Activated CD4-positive, alpha-beta T cell treated with anti-CD3 and anti-CD28 coated beads, Interleukin-2, amount 10 ng/mL, durations not matched to agents 7 days and 5 days (primary cell): ENCODE measurements at regions of chr9 and their contacts with region 1.

Region 1: GRCh38 chr9:131277910-131278701 is 1.8 kb upstream of the FAM78A start:
- DNase-seq: peak; percentile 84
- H3K4me3 Mint-ChIP-seq: peak overlapping the region; percentile 85
- H3K27ac Mint-ChIP-seq: peak overlapping the region; percentile 97
- H3K4me1 Mint-ChIP-seq: peaks cover 25% of the 10 kb centered on the region
- H3K27me3 Mint-ChIP-seq: peaks cover 14% of the 10 kb centered on the region

Region 2: DNA sequence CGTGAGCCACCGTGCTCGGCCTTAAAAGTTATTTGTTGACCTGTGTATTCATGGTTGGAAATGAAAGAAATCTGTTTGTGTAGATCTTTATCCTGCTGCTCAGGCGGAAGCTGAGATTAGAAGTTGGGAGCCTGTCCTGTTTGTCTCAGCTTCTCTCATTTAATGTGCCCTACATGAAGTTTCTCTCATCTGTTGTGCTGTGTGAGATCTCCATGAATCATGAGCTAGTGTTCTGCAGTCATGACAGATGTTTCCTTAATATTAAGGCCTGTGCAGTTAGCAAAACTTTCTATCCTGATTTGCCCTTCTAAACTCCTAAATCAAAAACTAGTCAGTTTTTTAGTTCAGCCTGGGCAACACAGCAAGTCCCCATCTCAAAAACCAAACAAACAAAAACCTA is 61.3 kb before region 1 on chr9:
- CTCF ChIA-PET with region 1: no interaction called
- POLR2A ChIA-PET with region 1: no interaction called
- DNase-seq: no peak
- H3K4me3 Mint-ChIP-seq: no peak overlapping the region
- H3K27ac Mint-ChIP-seq: no peak overlapping the region
- H3K4me1 Mint-ChIP-seq: peaks cover 1% of the 10 kb centered on the region
- H3K27me3 Mint-ChIP-seq: no peaks in the 10 kb centered on the region

Region 3: DNA sequence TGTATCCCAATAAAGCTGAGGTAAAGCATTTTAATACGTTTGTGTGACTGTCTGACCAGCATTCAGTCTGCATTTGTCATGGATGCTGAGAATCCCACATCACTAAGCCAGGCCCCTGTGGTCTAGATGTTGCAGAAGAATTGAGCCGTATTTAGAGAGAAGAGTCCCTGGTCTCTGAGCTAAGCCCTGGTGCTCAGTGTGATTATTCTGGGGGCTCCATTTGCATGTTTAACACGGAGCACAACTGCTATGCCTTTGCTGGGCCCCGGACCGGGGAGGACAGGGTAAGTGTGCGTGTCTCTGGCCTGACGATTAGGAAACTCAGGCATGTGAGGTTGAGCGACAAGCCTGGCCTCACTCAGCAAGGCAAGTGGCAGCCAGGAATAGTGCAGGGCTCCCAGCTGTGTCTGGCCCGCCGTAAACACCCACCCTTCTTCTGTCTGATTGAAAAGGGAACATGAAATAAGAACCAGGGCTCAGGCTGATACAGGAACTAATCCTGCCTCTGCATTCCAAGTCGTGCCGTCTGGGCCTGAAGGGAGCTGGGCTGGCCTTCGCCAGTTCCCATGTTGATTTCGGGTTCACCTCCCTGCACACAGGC is 24.1 kb before region 1 on chr9:
- CTCF ChIA-PET with region 1: interaction called, 74 read pairs
- POLR2A ChIA-PET with region 1: interaction called, 24 read pairs
- DNase-seq: no peak
- H3K4me3 Mint-ChIP-seq: peak overlapping the region; percentile 34
- H3K27ac Mint-ChIP-seq: peak overlapping the region; percentile 97
- H3K4me1 Mint-ChIP-seq: peaks cover 75% of the 10 kb centered on the region
- H3K27me3 Mint-ChIP-seq: no peaks in the 10 kb centered on the region

Region 4: DNA sequence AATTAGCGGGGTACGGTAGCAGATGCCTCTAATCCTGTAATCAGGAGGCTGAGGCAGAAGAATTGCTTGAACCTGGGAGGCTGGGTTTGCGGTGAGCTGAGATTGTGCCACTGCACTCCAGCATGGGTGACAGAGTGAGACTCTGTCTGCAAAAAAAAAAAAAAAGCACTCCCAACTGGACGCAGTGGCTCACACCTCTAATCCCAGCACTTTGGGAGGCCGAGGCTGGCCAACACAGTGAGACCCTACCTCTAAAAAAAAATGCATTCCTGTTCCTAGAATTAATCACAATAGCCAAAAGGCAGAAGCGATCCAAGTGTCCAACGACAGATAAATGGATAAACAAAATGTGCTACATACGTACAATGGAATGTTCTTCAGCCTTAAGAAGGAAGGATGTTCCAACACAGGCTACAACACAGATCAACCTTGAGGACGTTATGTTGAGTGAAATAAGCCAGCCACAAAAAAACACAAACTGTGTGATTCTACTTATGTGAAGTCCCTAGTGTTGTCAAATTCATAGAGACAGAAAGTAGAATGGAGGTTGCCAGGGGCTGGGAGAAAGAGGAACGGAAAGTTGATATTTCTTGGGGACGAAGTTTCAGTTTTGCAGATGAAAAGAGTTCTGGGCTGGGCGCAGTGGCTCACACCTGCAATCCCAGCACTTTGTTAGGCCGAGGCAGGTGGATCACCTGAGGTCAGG is 15.6 kb before region 1 on chr9:
- CTCF ChIA-PET with region 1: interaction called, 74 read pairs
- POLR2A ChIA-PET with region 1: interaction called, 4 read pairs
- DNase-seq: peak; percentile 12
- H3K4me3 Mint-ChIP-seq: peak overlapping the region; percentile 62
- H3K27ac Mint-ChIP-seq: peak overlapping the region; percentile 86
- H3K4me1 Mint-ChIP-seq: peaks cover 83% of the 10 kb centered on the region
- H3K27me3 Mint-ChIP-seq: no peaks in the 10 kb centered on the region

Region 5: DNA sequence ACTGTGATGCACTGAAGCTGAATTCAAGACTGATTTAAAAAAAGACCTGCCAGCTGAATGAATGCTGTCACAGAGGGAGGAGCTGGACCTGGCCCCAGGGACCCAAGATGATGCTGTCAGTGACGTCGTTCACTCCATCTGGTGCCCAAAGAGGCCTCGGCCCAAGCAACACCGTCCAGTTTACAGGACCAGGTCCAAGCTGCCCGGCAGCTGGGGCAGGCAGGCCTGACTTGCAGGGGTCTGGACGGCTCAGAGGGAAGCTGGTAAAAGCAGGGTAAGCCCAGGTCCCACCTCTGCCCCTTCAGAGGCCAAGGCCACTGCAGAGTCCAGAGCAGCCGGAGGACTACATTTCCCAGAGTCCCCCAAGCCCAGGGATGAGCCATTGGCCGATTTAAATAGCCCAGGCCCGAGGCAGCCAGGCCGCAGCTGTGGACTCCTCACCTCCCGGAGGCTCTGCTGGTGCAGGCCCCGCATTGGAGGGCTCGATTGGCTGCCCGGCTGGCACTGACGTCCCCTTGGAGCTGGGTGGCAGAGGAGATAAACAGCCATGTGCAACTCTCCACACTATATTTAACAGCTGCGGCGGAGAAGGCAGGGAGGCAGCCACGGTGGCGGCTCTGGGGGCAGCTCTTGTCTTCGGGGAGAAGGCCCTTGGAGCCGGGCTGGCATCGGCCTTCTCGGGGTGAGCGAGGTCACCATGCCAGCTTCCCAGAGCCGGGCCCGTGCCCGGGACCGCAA is 11.4 kb after region 1 on chr9 and contains the start of gene PLPP7:
- CTCF ChIA-PET with region 1: interaction called, 11 read pairs
- POLR2A ChIA-PET with region 1: interaction called, 5 read pairs
- DNase-seq: no peak
- H3K4me3 Mint-ChIP-seq: no peak within 1 kb of the TSS
- H3K27ac Mint-ChIP-seq: no peak within 1 kb of the TSS
- H3K4me1 Mint-ChIP-seq: no peaks in the 10 kb centered on the region
- H3K27me3 Mint-ChIP-seq: no peaks in the 10 kb centered on the region
- total RNA-seq, gene PLPP7: 0.21 TPM in 1 of 2 experiments, not detected in the other